Upper lobe of right lung (tissue), 1 donor: ENCODE measurements at regions of chr19 and their contacts with region 1.

Region 1: GRCh38 chr19:32224371-32225244 is 120.8 kb upstream of the ZNF507 start:
- DNase-seq: peak; percentile 82
- ATAC-seq: peak; percentile 98
- H3K4me3 ChIP-seq: peak overlapping the region; percentile 30
- H3K27ac ChIP-seq: no peak overlapping the region
- H3K4me1 ChIP-seq: peaks cover 4% of the 10 kb centered on the region
- H3K27me3 ChIP-seq: peaks cover 26% of the 10 kb centered on the region
- CTCF ChIP-seq: peak; percentile 100

Region 2: DNA sequence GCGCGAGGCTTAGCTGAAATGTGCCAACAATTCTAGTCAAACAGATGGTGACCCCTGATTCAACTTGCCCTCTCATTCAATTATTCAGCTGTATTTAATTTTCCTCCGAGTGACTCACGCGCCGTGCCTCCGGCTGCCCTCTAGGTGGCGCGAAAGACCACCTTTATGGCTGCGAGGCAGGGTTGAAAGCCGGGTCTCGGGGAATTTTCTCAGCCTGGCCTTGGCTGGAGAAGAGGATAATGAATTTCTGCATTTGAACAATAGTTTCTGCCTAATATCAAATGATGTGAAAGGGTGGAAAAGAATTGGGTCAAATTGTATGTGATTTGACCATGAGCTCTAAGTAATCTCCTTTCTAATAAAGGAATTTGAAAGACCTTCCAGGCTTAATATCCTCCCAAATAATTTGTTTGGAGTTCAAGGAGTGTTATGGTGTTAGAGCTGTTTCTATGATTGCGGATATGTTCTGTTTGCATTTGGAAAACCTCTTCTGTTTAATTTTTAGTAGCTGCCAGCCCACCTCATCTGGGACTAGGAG is 1541.5 kb before region 1 on chr19:
- intact Hi-C with region 1: loop called (anchors 10 kb)
- DNase-seq: peak; percentile 77
- ATAC-seq: peak; percentile 82
- H3K4me3 ChIP-seq: no peak overlapping the region
- H3K27ac ChIP-seq: no peak overlapping the region
- H3K4me1 ChIP-seq: peaks cover 3% of the 10 kb centered on the region
- H3K27me3 ChIP-seq: peaks cover 33% of the 10 kb centered on the region
- CTCF ChIP-seq: peak; percentile 92

Region 3: DNA sequence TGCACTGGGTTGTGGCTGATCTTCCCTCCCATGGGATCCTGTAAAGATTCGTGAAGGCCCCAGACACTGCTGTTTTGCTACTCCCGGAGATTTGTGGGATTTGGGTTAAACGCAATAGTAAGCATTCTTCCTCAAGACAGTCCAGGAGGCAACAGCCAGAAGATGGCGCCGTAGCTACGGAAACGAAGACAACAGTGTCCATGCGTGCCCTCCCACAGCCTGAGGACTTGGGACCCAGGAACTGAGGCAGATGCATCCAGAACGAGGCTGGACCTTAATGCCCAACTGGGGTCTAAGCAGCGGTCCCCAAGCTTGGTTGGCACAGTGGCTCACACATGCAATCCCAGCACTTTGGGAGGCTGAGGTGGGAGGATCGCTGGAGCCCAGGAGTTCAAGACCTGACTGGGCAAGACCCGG is 63.2 kb after region 1 on chr19:
- intact Hi-C with region 1: no loop called
- DNase-seq: peak; percentile 68
- ATAC-seq: peak; percentile 72
- H3K4me3 ChIP-seq: no peak overlapping the region
- H3K27ac ChIP-seq: no peak overlapping the region
- H3K4me1 ChIP-seq: peaks cover 3% of the 10 kb centered on the region
- H3K27me3 ChIP-seq: no peaks in the 10 kb centered on the region
- CTCF ChIP-seq: peak; percentile 29